Left lung (tissue), 14 donors: ENCODE measurements at regions of chr16 and their contacts with region 1.

Region 1: DNA sequence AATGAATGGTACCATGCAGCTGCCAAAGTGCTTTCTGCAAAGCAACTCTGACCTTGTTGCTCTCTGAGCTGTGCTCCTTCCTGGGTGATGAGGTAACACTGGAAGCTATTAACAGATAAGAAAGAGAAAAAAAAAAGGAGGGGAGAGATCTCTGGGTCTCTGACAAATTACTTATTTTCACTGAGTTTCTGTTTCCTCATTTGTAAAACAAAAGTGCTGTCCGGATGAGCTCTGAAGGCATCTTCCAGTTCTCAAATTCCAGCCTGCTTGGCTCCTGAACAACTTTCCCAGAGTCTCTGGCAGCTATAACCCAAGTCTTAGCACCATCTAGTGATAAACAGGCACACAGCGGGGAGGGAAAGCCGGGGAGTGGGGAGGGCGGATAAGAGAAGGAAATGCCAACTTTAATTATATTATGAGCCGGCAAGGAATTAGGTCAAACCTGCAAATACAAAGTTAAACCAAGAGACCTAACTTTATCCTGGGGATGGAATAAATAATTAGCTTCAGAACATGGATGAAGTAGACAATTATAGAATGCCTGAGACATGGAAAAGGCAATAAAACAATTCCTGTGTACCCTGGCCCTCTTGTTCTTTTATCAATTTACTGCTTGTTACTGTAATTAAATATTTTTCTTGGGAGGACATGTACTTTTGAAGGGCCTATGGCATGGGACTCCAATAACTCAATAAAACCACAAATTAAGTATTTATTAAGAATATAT is 61.3 kb upstream of the KIFC3 start:
- DNase-seq: peak in 3 of 4 donors; percentile 66 to 83 (median 67)
- ATAC-seq: peak; percentile 96
- H3K4me3 ChIP-seq: no peak overlapping the region
- H3K27ac ChIP-seq: no peak overlapping the region
- H3K4me1 ChIP-seq: peaks cover 0 to 8% of the 10 kb centered on the region in 2 donors
- H3K27me3 ChIP-seq: no peaks in the 10 kb centered on the region
- CTCF ChIP-seq: peak; percentile 39 to 43

Region 2: DNA sequence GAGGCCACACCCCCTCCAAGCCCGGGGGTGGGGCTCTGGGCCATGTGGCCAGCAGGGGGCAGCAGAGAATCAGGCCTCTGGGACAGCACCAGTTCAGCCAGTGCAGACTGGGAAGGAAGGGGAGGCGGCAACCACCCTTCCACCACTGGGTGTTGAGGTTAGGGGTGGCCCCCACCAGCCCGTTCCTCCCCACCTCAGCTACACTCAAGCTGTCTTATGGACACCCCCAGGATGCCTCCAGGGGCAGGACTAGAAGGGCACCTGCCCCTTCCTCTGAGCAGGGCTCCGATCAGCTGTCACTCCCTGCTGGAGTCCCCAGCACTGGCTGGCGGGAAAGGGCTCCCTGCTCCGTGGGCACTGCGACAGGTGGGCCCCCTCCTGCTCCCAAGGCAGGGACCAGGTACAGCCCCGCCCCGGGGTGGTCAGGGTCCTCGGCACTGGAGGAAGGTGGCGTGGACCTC is 106.2 kb before region 1 on chr16:
- intact Hi-C with region 1: loop called in 1 of 2 experiments (anchors 5 kb)
- DNase-seq: peak; percentile 52 to 97 (median 82)
- ATAC-seq: peak; percentile 93
- H3K4me3 ChIP-seq: no peak overlapping the region
- H3K27ac ChIP-seq: peak overlapping the region in 1 of 2 donors; percentile 13
- H3K4me1 ChIP-seq: peaks cover 0 to 10% of the 10 kb centered on the region in 2 donors
- H3K27me3 ChIP-seq: no peaks in the 10 kb centered on the region
- CTCF ChIP-seq: peak; percentile 96 to 100

Region 3: DNA sequence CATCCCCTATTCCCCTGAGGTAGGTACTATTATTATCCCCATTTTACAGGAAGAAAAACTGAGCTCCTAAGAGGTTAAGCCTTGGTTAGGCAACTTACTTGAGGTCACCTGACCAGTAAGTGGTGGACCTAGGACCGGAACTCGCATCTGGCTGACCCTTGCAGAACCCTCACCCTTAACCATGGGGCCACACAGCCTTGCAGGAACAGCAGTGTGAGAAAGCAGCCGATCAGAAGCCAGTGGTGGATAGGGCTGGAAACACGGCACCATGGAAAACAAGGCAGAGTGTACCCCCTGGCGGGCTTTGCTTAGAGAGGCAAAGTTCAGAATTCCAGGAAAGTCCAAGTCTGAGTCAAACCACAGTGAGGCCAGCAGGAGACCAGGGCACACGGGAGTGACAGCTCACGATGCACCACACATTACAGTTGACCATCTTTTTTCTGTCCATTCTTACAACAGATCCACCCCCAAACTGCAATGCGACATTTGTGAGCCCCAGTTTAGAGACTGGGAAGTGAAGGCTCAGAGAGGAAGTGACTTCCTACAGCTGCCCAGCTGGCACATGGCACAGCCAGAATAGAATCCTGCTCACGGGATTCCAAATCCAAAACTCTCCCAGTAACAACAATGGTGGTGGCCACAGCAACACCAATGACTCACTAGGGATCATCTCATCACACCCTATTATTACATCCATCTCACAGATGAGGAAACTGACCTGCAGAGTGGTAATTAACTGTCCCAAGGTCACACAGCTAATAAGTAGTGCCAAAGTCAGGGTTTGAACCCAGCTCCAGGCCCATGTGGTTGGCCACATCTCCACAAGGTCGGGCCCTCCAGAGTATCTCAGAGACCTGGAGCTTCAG is 81.6 kb before region 1 on chr16:
- intact Hi-C with region 1: loop called in 1 of 2 experiments (anchors 10 kb)
- DNase-seq: peak in 1 of 4 donors; percentile 1
- ATAC-seq: no peak
- H3K4me3 ChIP-seq: no peak overlapping the region
- H3K27ac ChIP-seq: no peak overlapping the region
- H3K4me1 ChIP-seq: peaks cover 5% of the 10 kb centered on the region in 2 donors
- H3K27me3 ChIP-seq: no peaks in the 10 kb centered on the region
- CTCF ChIP-seq: no peak

Region 4: GRCh38 chr16:57816334-57816745 is 47.3 kb before region 1 on chr16:
- intact Hi-C with region 1: no loop called
- DNase-seq: peak; percentile 64 to 95 (median 92)
- ATAC-seq: peak; percentile 96
- H3K4me3 ChIP-seq: no peak overlapping the region
- H3K27ac ChIP-seq: peak overlapping the region; percentile 80 to 83
- H3K4me1 ChIP-seq: peaks cover 5 to 35% of the 10 kb centered on the region in 2 donors
- H3K27me3 ChIP-seq: no peaks in the 10 kb centered on the region
- CTCF ChIP-seq: no peak